ENCODE measurements at regions of chr19 and their contacts with region 1.

Region 1: DNA sequence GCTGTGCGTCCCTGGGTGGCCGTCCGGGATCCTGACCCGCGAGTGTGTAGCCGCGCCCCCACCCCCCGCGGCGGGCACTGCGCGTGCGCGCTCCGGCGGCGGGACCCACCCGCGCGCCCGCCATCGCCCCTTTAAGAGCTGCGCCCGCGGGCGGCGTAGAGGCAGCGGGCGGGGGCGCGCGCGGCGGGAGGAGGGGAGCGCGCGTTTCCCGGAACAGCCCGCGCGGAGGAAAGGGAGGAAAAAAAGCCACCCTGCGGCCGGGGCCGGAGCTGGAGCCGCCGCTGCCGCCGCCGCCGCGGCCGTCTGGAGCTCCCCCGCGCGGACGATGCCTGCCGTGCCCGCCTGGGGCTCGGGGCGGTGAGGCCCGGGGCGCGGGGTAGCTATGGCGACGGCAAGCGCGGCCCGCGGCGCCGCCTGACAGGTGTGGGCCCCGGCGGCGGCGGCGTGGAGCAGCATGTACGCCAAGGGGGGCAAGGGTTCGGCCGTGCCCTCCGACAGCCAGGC is at the start of gene SSBP4:
- DNase-seq: peak; percentile 75
- H3K4me3 ChIP-seq: peak within 1 kb of the TSS; percentile 60 to 89 (median 68)
- H3K27ac ChIP-seq: peak within 1 kb of the TSS; percentile 87 to 92 (median 88)
- H3K4me1 ChIP-seq: peaks cover 40 to 84% (median 71%) of the 10 kb centered on the region in 4 donors
- H3K27me3 ChIP-seq: peaks cover 24% of the 10 kb centered on the region
- CTCF ChIP-seq: peak in 2 of 5 experiments; percentile 31 to 35
- EP300 ChIP-seq: no peak
- POLR2A ChIP-seq: no peak
- total RNA-seq, gene SSBP4: 9.4 to 40.4 (median 32.2) TPM

Region 2: GRCh38 chr19:17755977-17756670 is 663.1 kb before region 1 on chr19:
- in situ Hi-C with region 1: no loop called
- intact Hi-C with region 1: no loop called
- DNase-seq: peak; percentile 62
- H3K4me3 ChIP-seq: no peak overlapping the region
- H3K27ac ChIP-seq: no peak overlapping the region
- H3K4me1 ChIP-seq: peaks cover 0 to 16% (median 3%) of the 10 kb centered on the region in 4 donors
- H3K27me3 ChIP-seq: no peaks in the 10 kb centered on the region
- CTCF ChIP-seq: no peak
- EP300 ChIP-seq: no peak
- POLR2A ChIP-seq: no peak

Region 3: DNA sequence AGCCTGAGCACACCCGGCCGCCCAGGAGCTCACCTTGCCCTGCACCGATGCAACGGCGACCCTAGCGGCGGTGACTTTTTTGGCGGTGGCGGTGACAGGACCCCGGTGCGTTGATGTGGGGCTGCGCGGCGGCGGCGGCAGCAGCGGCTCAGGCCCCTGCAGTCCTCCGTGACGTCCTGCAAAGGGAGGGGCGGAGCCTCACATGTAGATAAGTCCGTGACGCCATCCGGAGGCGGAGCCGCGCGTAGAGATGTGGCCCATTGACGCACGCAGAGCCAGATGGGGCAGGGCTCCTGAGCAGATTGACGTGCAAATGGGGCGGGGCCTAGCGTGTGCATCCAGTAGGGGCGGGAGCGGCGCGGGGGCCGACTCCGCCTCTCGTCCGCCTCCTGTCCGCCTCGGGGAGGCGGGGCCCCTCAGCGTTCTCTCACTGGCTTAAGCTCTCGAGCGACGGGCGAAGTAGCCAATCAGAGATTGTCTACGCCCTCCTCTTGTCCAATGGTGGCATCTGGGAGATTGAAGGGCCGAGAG is 215.3 kb before region 1 on chr19 and contains the start of gene RAB3A:
- in situ Hi-C with region 1: no loop called
- intact Hi-C with region 1: loop called (anchors 10 kb)
- DNase-seq: peak; percentile 100
- H3K4me3 ChIP-seq: peak within 1 kb of the TSS; percentile 66 to 83 (median 75)
- H3K27ac ChIP-seq: peak within 1 kb of the TSS; percentile 90 to 99 (median 96)
- H3K4me1 ChIP-seq: peaks cover 0 to 27% (median 23%) of the 10 kb centered on the region in 4 donors
- H3K27me3 ChIP-seq: peaks cover 9% of the 10 kb centered on the region
- CTCF ChIP-seq: peak in 2 of 5 experiments; percentile 12 to 35
- EP300 ChIP-seq: peak; percentile 90
- POLR2A ChIP-seq: peak; percentile 79
- total RNA-seq, gene RAB3A: 2.2 to 8.6 (median 3.8) TPM in 3 of 4 donors, not detected in the other

Region 4: GRCh38 chr19:18251587-18252369 is 167.5 kb before region 1 on chr19:
- in situ Hi-C with region 1: loop called in 1 of 4 experiments (anchors 25 kb)
- intact Hi-C with region 1: no loop called
- DNase-seq: peak; percentile 86
- H3K4me3 ChIP-seq: no peak overlapping the region
- H3K27ac ChIP-seq: no peak overlapping the region
- H3K4me1 ChIP-seq: peaks cover 0 to 29% (median 10%) of the 10 kb centered on the region in 4 donors
- H3K27me3 ChIP-seq: peaks cover 8% of the 10 kb centered on the region
- CTCF ChIP-seq: peak; percentile 94 to 99 (median 97)
- EP300 ChIP-seq: no peak
- POLR2A ChIP-seq: no peak

Region 5: GRCh38 chr19:18259893-18260292 is 159.4 kb before region 1 on chr19:
- in situ Hi-C with region 1: loop called in 1 of 4 experiments (anchors 25 kb)
- intact Hi-C with region 1: loop called (anchors 10 kb)
- DNase-seq: no peak
- H3K4me3 ChIP-seq: no peak overlapping the region
- H3K27ac ChIP-seq: no peak overlapping the region
- H3K4me1 ChIP-seq: peaks cover 0 to 8% (median 2%) of the 10 kb centered on the region in 4 donors
- H3K27me3 ChIP-seq: peaks cover 6% of the 10 kb centered on the region
- CTCF ChIP-seq: no peak
- EP300 ChIP-seq: no peak
- POLR2A ChIP-seq: no peak

Region 6: GRCh38 chr19:18340190-18340989 is 78.9 kb before region 1 on chr19 and contains the start of gene PGPEP1:
- in situ Hi-C with region 1: loop called in 1 of 4 experiments (anchors 5 kb)
- intact Hi-C with region 1: no loop called
- DNase-seq: peak; percentile 83
- H3K4me3 ChIP-seq: peak within 1 kb of the TSS; percentile 54 to 87 (median 74)
- H3K27ac ChIP-seq: peak within 1 kb of the TSS; percentile 88 to 93 (median 90)
- H3K4me1 ChIP-seq: peaks cover 0 to 48% (median 23%) of the 10 kb centered on the region in 4 donors
- H3K27me3 ChIP-seq: no peaks in the 10 kb centered on the region
- CTCF ChIP-seq: no peak
- EP300 ChIP-seq: no peak
- POLR2A ChIP-seq: peak; percentile 73
- total RNA-seq, gene PGPEP1: 59.7 to 110 (median 73.0) TPM